ENCODE measurements at regions of chr14 and their contacts with region 1.

Region 1: GRCh38 chr14:75452900-75453747 is 25.3 kb downstream of the JDP2 start:
- DNase-seq: no peak
- CTCF ChIP-seq: no peak

Region 2: DNA sequence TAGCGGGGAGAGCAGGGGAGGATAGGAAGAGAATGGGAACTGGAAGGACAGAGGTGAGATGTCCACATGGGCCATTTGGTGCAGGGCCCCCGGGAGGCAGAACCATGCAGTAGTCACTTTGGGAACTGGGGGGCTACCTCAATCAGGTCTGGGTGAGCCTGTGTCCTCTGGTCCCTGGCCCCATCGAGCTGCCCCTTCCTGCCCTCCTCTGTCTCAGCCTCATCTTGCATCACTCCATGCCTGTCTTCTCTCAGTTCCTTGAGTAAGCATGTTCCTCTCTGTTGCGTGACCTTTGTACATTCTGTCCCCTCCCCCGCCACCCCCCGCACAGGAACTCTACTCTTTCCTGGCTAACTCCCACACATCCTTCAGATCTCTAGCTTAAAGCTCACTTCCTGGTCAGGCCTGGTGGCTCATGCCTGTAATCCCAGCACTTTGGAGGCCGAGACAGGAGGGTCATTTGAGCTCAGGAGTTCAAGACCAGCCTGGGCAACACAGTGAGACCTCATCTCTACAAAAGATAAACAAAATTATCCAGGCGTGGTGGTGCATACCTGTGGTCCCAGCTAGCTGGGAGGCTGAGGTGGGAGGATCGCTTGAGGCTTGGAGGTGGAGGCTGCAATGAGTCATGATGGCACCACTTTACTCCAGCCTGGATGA is 151.3 kb before region 1 on chr14:
- CTCF ChIA-PET with region 1: interaction called, 119 read pairs
- POLR2A ChIA-PET with region 1: no interaction called
- DNase-seq: no peak
- CTCF ChIP-seq: no peak

Region 3: GRCh38 chr14:75433631-75434071 is 19.5 kb before region 1 on chr14:
- CTCF ChIA-PET with region 1: interaction called, 18 read pairs
- POLR2A ChIA-PET with region 1: no interaction called
- DNase-seq: no peak
- CTCF ChIP-seq: no peak

Region 4: GRCh38 chr14:75440733-75441477 is 12.2 kb before region 1 on chr14:
- CTCF ChIA-PET with region 1: interaction called, 18 read pairs
- POLR2A ChIA-PET with region 1: no interaction called
- DNase-seq: no peak
- CTCF ChIP-seq: no peak

Region 5: GRCh38 chr14:75501080-75501479 is 48.0 kb after region 1 on chr14:
- CTCF ChIA-PET with region 1: no interaction called
- POLR2A ChIA-PET with region 1: no interaction called
- DNase-seq: no peak
- CTCF ChIP-seq: no peak